ENCODE measurements at regions of chr2 and their contacts with region 1.

Region 1: GRCh38 chr2:128178650-128179460 is 87.9 kb downstream of the UGGT1 start:
- DNase-seq: peak; percentile 63
- ATAC-seq: peak; percentile 97

Region 2: DNA sequence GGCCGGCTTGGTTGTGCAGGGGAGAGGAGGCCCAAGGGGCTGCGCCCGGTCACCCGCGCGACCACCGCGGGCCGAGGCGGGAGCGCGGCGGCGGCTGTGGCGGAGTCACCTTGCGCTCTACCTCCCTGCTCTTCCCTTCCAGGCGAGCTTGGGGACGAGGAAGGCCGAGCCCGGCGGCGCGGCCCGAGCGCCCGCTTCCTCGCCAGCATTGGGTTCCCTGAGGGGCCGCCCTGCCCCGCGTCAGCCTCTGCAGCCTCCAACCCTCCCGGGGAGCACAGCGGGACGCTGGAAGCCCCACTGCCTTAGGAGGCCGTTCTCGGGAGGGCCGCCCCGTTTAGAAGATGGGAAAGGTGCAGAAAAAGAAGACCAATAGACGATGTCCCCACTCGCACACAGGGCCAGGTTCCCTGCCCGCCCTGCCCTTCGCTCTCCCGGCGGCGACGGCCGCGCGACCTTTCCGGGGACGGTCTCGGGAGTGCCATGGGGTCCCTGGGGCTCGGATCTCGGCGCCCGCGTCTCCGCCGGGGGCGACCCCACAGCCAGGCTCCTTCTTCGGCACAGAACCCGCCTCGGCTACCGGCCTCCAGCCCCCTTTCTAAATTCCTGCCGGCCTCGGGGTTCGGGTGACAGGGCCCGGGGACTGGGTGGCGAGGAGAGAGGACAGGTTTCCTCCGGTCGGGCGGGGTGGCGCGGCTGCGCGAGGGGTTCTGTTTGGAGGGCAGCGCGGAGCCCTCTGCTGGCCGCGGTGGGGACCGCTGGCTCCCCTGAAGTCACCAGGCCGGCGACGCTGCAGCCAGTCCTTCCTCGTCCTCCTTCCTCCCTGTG is 54.3 kb after region 1 on chr2:
- intact Hi-C with region 1: loop called (anchors 5 kb)
- DNase-seq: peak; percentile 95
- ATAC-seq: peak; percentile 99

Region 3: GRCh38 chr2:128305159-128306087 is 126.6 kb after region 1 on chr2:
- intact Hi-C with region 1: loop called (anchors 10 kb)
- DNase-seq: peak; percentile 88
- ATAC-seq: peak; percentile 66

Measured in Right ventricle myocardium superior (tissue), 1 donor.